GM13977 (cell line): ENCODE measurements at regions of chr5 and their contacts with region 1.

Region 1: DNA sequence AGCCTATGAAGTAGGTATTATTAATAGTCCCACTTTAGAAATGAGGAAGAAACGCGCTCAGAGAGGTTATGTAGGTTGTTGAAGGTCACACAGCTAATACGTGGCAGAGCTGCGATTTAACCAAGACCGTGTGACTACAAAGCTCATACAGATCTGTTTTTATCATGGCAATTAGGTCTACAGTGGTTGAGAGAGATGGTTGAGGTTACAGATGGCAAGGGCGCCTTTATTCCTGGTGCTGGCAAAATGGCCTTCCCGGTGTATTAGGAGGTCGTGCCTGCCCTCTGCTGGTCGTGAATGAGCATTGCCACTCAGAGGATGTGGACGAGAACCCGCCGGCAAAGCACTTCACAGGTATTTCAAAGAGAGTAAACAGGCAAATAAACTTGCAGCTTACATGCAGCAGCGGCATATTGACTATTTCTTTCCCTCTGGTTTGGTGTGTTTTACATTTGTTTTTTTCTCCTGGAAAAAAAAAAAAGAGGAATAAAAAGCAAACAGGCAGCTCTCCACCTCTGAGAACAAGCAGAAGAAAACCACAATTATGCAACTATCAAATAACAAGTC is 65.3 kb upstream of the EGFLAM start:
- DNase-seq: peak; percentile 77
- CTCF ChIP-seq: peak; percentile 96

Region 2: DNA sequence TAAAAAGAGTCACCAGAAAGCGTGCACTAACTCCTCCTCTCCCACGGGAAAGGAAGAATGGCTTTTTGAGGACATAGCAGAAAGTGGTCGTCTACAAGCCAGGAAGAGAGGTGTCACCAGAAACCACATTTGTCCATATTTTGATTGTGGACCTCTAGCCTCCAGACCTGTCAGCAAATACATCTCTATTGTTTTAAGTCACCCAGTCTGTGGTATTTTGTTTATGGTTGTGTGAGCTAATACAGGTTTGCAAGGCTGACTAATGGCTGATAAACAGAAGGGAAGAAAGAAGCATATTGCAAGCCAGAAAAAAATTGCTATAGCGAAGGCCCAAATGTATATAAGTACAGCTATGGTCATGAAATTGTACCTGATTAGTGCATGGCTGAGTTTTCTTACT is 792.6 kb before region 1 on chr5:
- in situ Hi-C with region 1: loop called (anchors 10 kb)
- DNase-seq: no peak
- CTCF ChIP-seq: no peak

Region 3: GRCh38 chr5:37837414-37838032 is 355.6 kb before region 1 on chr5:
- in situ Hi-C with region 1: loop called (anchors 10 kb)
- DNase-seq: peak; percentile 92
- CTCF ChIP-seq: peak; percentile 93